A673 (cell line): ENCODE measurements at regions of chr11 and their contacts with region 1.

Region 1: DNA sequence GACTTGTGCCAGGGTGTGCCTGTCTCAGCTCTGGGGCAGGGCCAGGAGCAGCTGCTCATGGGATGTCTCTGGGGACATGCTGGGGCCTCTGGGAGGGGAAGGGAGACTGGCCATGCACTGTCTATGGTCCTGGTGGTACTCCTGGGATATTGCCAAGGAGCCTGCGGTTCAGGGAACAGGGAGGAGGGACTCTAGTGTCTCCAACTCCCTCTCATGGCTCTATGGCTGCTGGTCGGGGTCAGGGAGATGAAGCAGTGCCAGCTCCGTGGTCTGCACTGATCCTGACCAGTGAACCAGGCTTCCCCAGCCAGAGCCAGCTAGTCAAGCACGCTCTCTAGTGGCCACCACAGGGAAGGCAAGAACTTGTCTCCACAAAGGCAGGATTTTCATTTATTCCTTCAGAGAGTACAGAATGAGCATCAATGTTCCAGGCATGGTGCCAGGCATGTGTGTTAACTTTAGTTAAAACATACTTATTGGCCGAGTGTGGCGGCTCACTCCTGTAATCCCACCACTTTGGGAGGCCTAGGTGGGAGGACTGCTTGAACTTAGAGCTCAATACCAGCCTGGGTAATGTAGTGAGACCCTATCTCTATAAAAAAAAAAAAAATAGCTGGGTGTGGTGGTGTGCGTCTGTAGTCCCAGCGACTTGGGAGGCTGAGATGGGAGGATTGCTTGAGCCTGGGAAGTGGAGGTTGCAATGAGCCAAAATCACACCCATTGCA is 2.5 kb upstream of the BEST1 start:
- DNase-seq: peak; percentile 96
- H3K4me3 ChIP-seq: no peak overlapping the region
- H3K27ac ChIP-seq: peak overlapping the region; percentile 44
- H3K4me1 ChIP-seq: peaks cover 51% of the 10 kb centered on the region
- H3K27me3 ChIP-seq: no peaks in the 10 kb centered on the region
- CTCF ChIP-seq: peak; percentile 99

Region 2: DNA sequence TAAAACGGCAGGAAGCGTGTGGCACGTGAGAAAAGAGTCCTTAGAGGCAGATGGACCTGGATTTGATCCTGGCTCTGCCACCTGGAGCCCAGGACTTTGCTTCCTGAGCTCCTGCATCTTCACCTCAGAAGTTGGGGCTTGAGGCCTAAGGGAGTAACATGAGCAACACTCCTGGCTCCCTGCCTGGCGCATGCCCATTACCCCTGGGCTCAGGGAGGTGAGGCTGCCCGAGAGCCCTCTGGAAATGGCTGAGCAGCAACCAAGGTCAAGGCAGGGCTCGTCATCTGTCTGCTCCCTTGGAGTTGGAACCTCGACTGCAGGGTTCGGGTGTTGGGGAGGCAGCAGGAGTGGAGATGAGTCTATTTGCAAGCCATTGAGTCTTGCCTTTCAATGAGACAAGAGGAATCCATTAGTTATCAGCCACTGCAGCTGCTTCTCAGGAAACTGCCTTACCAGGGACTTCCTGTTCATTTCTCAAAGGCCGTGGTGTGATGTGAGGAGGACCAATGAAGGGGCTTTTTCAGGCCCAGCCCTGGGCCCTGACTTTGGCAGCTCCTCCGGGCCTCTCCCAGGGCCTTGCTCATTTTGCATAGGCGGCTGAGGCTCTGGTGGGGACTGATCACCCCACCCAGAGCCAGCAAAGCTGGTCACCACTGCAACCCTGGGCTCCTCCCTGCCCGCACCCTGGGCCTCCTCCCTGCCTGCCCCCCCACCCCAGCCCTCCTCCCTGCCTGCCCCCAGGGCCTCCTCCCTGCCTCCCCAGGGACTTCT is 113.2 kb before region 1 on chr11:
- CTCF ChIA-PET with region 1: interaction called, 11 read pairs
- POLR2A ChIA-PET with region 1: no interaction called
- intact Hi-C with region 1: no loop called
- DNase-seq: peak; percentile 99
- H3K4me3 ChIP-seq: peak overlapping the region; percentile 96
- H3K27ac ChIP-seq: peak overlapping the region; percentile 97
- H3K4me1 ChIP-seq: peaks cover 72% of the 10 kb centered on the region
- H3K27me3 ChIP-seq: no peaks in the 10 kb centered on the region
- CTCF ChIP-seq: no peak

Region 3: DNA sequence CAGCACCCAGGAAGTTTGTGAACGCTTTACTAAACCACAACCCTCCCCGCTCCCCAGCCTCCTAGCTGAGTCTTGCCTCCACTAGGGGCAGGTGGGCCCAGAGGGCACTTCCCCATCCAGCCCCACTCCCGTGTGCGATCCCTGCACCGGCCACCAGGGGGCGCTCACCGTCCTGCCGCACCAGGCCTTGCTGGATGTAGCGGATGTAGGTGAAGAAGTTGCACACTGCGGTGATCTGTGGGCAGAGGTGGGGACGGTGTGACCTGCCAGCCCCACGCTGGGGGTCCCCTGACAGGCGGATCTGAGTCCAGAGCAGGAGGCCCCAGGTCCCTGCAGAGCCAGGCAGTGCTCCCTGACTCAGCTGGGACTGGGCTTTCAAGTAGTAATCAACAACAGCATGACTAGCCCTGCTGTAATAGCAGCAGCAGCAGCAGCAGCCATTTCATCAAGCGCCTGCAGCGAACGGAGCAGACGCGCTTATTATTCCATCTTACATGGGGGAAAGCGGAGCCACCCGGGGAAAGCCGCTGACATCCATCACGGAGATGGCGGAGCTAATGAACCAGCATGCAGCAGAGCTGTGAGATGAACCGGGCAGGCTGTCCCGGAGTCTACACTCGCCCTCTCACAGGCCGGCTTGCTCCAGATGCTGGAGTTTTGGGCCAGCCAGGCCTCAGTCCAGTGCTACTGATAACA is 48.4 kb before region 1 on chr11:
- CTCF ChIA-PET with region 1: interaction called, 157 read pairs
- POLR2A ChIA-PET with region 1: interaction called, 8 read pairs
- intact Hi-C with region 1: loop called (anchors 1 kb)
- DNase-seq: peak; percentile 91
- H3K4me3 ChIP-seq: no peak overlapping the region
- H3K27ac ChIP-seq: peak overlapping the region; percentile 48
- H3K4me1 ChIP-seq: peaks cover 5% of the 10 kb centered on the region
- H3K27me3 ChIP-seq: no peaks in the 10 kb centered on the region
- CTCF ChIP-seq: peak; percentile 100

Region 4: DNA sequence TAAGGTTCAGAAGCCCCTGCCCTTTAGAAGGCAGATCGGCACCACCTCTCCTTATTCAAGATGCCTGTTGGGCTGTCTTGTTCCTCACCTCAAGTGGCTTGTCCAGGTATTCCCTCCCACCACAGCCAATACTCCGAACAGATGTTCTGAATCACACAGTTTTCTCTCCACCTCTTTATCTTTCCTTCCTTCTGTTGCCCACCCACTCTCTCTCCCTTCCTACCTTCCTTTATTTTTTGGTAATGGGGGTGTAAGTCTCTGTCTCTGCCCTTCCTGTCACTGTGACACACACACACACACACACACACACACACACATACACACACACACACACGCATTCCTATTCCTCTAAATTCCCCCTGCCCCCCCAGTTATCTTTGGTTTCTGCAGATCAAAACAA is 10.9 kb after region 1 on chr11:
- CTCF ChIA-PET with region 1: no interaction called
- POLR2A ChIA-PET with region 1: interaction called, 13 read pairs
- intact Hi-C with region 1: no loop called
- DNase-seq: no peak
- H3K4me3 ChIP-seq: no peak overlapping the region
- H3K27ac ChIP-seq: no peak overlapping the region
- H3K4me1 ChIP-seq: peaks cover 8% of the 10 kb centered on the region
- H3K27me3 ChIP-seq: no peaks in the 10 kb centered on the region
- CTCF ChIP-seq: no peak

Region 5: DNA sequence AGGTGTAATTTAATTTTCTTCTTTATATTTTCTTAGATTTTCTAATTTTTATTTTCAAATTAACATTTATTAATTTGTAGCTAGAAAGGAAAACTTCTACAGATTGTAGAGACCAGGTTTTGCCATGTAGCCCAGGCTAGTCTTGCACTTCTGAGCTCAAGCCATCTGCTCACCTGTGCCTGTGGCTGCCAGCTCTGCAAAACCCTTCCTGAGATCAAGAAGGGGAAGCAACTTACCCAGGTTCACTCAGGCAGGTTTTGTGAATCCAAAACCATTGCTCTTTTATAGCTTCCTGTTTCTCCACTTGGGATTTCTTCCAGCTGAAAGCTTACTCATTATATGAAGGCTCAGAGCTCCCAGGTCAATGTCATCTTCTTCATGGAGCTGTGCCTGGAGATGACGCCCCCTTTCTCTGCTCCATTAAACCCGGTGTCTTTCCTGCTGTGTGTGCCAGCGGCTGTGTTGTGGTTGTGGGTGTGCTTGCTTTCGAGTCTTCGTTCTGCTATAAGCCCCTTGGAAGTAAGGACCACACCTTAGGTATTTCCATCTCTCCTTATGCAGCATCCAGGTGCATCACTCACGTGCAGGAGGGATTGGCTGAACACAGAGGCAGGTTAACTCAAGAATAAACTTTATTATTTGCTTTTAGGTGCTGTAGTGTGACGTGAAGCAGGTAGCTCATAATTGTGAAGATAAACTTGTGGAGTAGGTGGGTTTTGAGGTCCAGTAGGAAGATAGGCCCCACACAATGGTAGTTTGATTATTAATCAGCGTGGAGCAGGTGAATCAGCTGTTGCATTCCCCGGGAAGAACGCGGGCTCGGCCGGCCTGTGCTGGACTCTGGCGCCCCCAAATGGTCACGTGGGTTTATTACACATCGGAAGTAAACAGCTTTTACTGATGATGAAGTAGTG is 134.0 kb after region 1 on chr11:
- CTCF ChIA-PET with region 1: interaction called, 38 read pairs
- POLR2A ChIA-PET with region 1: no interaction called
- intact Hi-C with region 1: loop called (anchors 2 kb)
- DNase-seq: peak; percentile 74
- H3K4me3 ChIP-seq: no peak overlapping the region
- H3K27ac ChIP-seq: no peak overlapping the region
- H3K4me1 ChIP-seq: peaks cover 6% of the 10 kb centered on the region
- H3K27me3 ChIP-seq: no peaks in the 10 kb centered on the region
- CTCF ChIP-seq: peak; percentile 97

Region 6: GRCh38 chr11:62217191-62217748 is 269.6 kb after region 1 on chr11:
- CTCF ChIA-PET with region 1: no interaction called
- POLR2A ChIA-PET with region 1: no interaction called
- intact Hi-C with region 1: no loop called
- DNase-seq: peak; percentile 39
- H3K4me3 ChIP-seq: no peak overlapping the region
- H3K27ac ChIP-seq: no peak overlapping the region
- H3K4me1 ChIP-seq: no peaks in the 10 kb centered on the region
- H3K27me3 ChIP-seq: no peaks in the 10 kb centered on the region
- CTCF ChIP-seq: peak; percentile 66